GM18951 (cell line): ENCODE measurements at regions of chr11 and their contacts with region 1.

Region 1: GRCh38 chr11:60363542-60364510 is 14.5 kb upstream of the MS4A7 start:
- POLR2A ChIP-seq: no peak

Region 2: DNA sequence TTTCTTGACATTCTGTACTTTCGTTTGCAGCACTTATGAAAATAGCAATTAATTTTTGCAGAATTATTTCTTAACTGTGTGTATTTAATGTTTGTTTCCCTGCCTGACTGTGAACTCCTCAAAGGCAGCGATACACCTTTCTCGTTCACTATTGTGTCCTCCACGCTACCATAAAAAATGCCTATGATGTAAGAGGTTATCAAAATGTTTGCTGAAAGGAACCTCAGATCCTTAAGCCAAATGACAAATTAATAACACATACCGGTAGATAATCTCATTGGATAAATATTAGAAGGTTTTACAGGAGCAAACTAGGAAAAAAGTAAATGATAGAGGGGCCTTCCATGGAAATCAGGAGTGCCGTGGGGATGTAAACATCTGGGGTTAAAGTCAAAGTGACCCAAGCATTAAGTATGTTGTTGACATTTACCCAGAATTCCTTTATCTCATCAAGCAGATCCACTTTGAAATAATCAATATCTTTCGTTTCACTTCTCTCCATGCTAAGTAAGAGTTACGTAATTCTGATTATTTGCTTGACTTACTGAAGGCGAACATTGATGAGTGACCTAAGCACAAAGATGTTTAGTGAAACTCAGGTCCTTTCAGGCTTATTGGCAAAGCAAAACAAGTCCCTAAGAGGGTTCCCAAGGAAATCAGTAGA is 487.8 kb before region 1 on chr11:
- in situ Hi-C with region 1: no loop called
- POLR2A ChIP-seq: no peak

Region 3: DNA sequence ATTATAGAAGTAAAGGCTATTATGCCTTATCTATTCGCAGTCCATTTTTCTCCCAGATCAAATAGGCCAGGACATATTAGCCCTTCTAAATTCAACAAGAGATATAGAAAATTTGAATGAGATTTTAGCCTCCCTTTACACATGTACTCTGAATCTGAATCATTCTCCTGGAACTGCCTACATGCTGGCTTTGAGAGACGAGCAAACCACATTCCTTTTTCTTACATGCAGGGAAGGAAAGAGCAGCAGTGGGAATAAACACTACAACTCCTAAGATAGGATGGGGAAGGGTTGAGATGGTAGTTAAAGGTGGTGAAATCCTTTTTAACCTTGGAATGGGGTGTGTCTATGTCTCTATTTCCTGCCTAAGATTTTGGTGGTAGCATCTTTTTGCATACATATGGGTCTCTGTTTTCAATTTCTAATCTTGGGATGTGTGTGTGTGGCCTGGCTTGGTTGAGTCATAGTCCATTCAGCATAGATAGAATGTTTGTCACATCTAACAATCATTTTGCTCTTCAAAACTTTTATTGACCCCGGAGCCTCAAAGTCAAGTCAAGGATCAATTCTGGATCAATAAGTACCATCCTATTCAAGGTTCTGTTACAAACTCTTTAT is 334.7 kb before region 1 on chr11:
- in situ Hi-C with region 1: no loop called
- POLR2A ChIP-seq: no peak

Region 4: GRCh38 chr11:60251485-60252212 is 112.2 kb before region 1 on chr11:
- in situ Hi-C with region 1: no loop called
- POLR2A ChIP-seq: no peak

Region 5: DNA sequence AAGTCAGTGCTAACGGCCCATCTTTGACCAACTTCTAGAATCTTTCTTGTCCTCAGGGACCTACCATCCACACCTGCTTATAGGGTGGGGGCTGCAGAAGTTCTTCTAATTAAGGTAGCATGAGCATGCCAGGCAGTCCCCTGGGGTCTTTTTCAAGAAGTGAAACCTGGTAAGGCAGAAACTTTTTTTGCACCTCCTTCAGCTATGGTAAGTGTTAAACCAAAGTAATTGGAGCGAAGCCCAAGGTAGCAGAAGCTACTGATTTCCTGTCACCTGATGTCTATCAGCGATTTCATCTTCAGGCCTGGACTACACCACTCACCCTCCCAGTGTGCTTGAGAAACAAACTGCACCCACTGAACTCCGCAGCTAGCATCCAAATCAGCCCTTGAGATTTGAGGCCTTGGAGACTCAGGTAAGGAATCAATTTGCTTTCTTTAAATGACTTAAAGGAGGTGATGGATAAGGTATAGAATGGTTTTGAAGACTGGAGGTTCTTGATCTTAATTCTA is 91.8 kb after region 1 on chr11 and contains the start of gene MS4A1:
- in situ Hi-C with region 1: loop called (anchors 5 kb)
- POLR2A ChIP-seq: peak; percentile 84

Region 6: GRCh38 chr11:60485986-60486385 is 122.2 kb after region 1 on chr11:
- in situ Hi-C with region 1: loop called (anchors 10 kb)
- POLR2A ChIP-seq: no peak

Region 7: DNA sequence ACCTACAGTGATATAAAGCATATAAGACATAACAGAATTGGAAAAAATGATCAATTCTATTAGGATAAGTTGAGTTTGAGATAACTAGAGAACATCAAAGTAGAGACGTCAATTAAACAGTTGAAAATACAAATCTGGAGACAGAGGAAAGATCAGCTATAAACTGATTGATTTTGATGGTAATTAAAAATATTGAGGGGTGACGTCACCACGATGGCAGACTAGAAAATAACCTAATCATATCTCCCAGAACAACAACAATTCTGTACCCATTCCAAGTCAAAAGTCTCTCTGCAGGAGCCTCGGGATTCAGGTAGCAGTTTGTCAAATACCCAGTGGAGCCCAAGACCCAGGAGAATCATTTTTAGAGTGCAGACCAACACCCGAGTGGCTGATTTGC is 180.2 kb after region 1 on chr11:
- in situ Hi-C with region 1: no loop called
- POLR2A ChIP-seq: no peak

Region 8: GRCh38 chr11:60615497-60615896 is 251.7 kb after region 1 on chr11:
- in situ Hi-C with region 1: loop called (anchors 10 kb)
- POLR2A ChIP-seq: no peak